ENCODE measurements at regions of chr11 and their contacts with region 1.

Region 1: GRCh38 chr11:75383246-75383645 is 16.1 kb upstream of the RPS3 start:
- DNase-seq: peak; percentile 72
- ATAC-seq: peak; percentile 81
- H3K4me3 Mint-ChIP-seq: peak overlapping the region; percentile 19
- H3K27ac Mint-ChIP-seq: peak overlapping the region; percentile 92
- H3K4me1 Mint-ChIP-seq: peaks cover 31% of the 10 kb centered on the region
- H3K27me3 Mint-ChIP-seq: peaks cover 6% of the 10 kb centered on the region

Region 2: GRCh38 chr11:75371941-75372789 is 11.1 kb before region 1 on chr11:
- CTCF ChIA-PET with region 1: interaction called, 14 read pairs
- POLR2A ChIA-PET with region 1: no interaction called
- DNase-seq: no peak
- ATAC-seq: no peak
- H3K4me3 Mint-ChIP-seq: no peak overlapping the region
- H3K27ac Mint-ChIP-seq: no peak overlapping the region
- H3K4me1 Mint-ChIP-seq: peaks cover 43% of the 10 kb centered on the region
- H3K27me3 Mint-ChIP-seq: no peaks in the 10 kb centered on the region

Region 3: GRCh38 chr11:75422253-75423231 is 39.3 kb after region 1 on chr11:
- CTCF ChIA-PET with region 1: no interaction called
- POLR2A ChIA-PET with region 1: no interaction called
- DNase-seq: no peak
- ATAC-seq: no peak
- H3K4me3 Mint-ChIP-seq: no peak overlapping the region
- H3K27ac Mint-ChIP-seq: peak overlapping the region; percentile 26
- H3K4me1 Mint-ChIP-seq: no peaks in the 10 kb centered on the region
- H3K27me3 Mint-ChIP-seq: no peaks in the 10 kb centered on the region

Measured in activated CD8-positive, alpha-beta T cell treated with anti-CD3 and anti-CD28 coated beads, Interleukin-2, amount 10 ng/mL, durations not matched to agents 7 days and 5 days (primary cell).